Adrenal gland (tissue), 19 donors: ENCODE measurements at regions of chr4 and their contacts with region 1.

Region 1: DNA sequence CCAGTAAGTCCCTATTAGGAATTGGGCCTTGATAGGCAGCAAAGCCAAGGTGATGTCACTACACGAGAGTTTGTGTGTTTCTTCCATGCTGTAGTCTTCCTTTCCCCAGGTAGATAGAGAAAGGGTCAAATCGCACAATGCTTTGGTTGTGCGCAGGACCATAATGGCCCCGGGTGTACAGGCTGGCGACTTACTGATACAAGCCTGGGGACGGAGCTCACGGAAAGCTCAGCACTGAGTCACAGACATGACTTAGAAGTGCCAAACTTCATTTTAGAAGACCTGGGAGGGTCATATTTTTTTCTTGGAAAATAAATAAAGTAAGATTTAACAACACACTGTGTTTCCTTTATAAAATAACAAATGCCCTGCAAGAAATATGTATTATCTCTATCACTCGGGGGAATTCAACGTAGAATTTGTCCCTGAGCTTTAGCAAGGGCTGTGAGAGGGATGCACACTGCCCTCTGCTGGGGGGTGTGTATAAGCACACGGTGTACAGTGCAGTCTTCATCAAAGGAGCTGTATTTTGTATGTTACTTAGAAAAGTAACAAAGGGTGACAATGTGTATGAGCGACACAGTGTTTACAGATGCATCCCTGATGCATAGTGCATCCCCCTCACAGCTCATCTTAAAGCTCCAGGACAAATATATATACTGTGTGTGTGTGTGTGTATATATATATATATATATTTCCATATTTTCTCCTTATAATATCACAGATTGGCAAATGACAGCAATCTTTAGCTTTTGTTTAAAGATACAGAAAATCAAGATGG is 254.5 kb upstream of the VEGFC start:
- DNase-seq: peak; percentile 60 to 77 (median 69)
- H3K4me3 ChIP-seq: peak overlapping the region in 1 of 4 donors; percentile 14
- H3K27ac ChIP-seq: no peak overlapping the region
- H3K4me1 ChIP-seq: peaks cover 0 to 8% of the 10 kb centered on the region in 2 donors
- H3K27me3 ChIP-seq: no peaks in the 10 kb centered on the region
- CTCF ChIP-seq: peak; percentile 76 to 92 (median 84)
- POLR2A ChIP-seq: no peak

Region 2: DNA sequence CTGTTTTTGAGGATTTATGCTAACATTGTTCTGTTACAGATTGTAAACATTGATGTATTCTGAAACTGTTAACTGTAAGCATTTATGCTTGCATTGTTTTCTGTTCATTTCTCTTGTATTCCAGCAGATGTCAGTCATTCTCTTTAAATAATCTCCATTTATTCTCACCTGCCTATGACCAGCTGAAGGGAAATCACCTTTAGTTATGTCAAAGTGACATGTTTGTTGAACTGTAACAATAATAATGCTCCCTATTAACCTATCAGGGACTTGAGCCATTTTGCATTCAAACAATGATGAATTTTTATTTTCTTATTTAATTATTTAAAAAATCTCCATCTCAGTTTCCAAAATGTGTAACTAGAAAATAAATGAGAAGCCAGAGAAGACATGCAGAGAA is 669.5 kb before region 1 on chr4:
- intact Hi-C with region 1: loop called in 1 of 2 experiments (anchors 5 kb)
- DNase-seq: no peak
- H3K4me3 ChIP-seq: no peak overlapping the region
- H3K27ac ChIP-seq: no peak overlapping the region
- H3K4me1 ChIP-seq: no peaks in the 10 kb centered on the region
- H3K27me3 ChIP-seq: no peaks in the 10 kb centered on the region
- CTCF ChIP-seq: peak in 4 of 6 experiments; percentile 43 to 53 (median 44)
- POLR2A ChIP-seq: no peak

Region 3: GRCh38 chr4:176563591-176563990 is 483.7 kb before region 1 on chr4:
- intact Hi-C with region 1: loop called in 1 of 2 experiments (anchors 10 kb)
- DNase-seq: no peak
- H3K4me3 ChIP-seq: no peak overlapping the region
- H3K27ac ChIP-seq: no peak overlapping the region
- H3K4me1 ChIP-seq: peaks cover 0 to 5% of the 10 kb centered on the region in 2 donors
- H3K27me3 ChIP-seq: no peaks in the 10 kb centered on the region
- CTCF ChIP-seq: peak in 3 of 6 experiments; percentile 31 to 45 (median 38)
- POLR2A ChIP-seq: no peak

Region 4: GRCh38 chr4:176789955-176790354 is 257.3 kb before region 1 on chr4:
- intact Hi-C with region 1: loop called in 1 of 2 experiments (anchors 5 kb)
- DNase-seq: peak in 3 of 7 donors; percentile 20 to 46 (median 22)
- H3K4me3 ChIP-seq: no peak overlapping the region
- H3K27ac ChIP-seq: no peak overlapping the region
- H3K4me1 ChIP-seq: peaks cover 0 to 7% of the 10 kb centered on the region in 2 donors
- H3K27me3 ChIP-seq: no peaks in the 10 kb centered on the region
- CTCF ChIP-seq: peak; percentile 43 to 69 (median 58)
- POLR2A ChIP-seq: no peak